ENCODE measurements at regions of chr6 and their contacts with region 1.

Region 1: DNA sequence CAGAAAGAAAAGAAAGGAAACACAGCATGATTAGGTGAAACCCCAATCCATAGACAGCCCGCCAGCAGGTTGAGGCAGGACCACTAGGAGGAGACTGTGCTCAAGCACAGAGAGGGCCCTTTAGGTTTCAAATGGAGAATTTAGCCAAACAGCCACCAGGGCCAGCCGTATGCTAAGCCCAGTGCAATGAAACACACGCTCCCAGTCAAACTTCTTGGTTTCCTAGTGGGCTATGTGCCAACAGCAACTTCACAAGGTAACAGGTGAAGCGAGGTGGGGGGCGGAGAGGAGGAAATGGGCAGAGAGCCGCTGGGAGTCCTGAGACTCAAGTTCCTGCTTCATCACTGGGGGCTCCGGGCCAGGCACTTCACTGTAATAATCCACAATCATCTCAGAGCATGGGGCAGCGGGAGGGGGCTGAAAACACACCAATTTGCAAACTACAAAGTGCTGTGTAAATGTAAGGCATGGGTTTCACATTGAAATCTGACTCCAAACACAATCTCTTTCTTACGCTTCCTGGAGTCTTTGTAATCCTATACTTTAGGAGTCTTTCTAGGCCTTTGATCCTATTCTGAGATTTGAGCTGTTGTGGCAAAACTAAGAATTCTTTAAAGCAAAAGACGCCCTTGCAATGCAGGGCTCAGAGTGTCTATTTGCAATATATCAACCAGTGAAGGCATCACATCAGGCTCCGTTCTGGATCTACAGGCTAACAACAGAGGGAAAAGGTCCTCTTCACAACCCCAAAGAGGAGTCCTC is 117.3 kb downstream of the OPRM1 start:
- DNase-seq: no peak
- H3K4me3 ChIP-seq: no peak overlapping the region
- H3K27ac ChIP-seq: no peak overlapping the region
- H3K4me1 ChIP-seq: peaks cover 0 to 3% of the 10 kb centered on the region in 2 donors
- H3K27me3 ChIP-seq: no peaks in the 10 kb centered on the region
- CTCF ChIP-seq: peak; percentile 29 to 50 (median 31)

Region 2: DNA sequence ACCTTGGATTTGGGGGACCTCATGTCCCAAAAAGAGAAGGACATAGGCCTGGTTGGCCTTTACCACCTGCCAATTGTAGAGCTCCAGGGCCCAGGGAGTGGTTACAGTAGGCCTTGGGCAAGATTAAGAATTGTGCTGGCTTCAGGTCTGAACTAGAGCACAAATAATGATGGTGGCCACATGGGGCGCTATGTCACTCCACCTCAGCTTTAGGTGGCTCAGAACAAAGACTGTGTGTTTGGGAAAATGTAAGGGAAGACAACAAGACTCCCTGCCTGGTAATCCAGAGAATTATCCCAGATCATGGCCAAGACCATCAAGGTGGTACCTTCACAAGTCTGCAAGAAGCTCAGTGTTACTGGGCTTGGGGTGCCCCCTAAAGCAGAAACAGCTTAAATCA is 342.2 kb before region 1 on chr6:
- intact Hi-C with region 1: no loop called
- DNase-seq: no peak
- H3K4me3 ChIP-seq: no peak overlapping the region
- H3K27ac ChIP-seq: no peak overlapping the region
- H3K4me1 ChIP-seq: no peaks in the 10 kb centered on the region
- H3K27me3 ChIP-seq: no peaks in the 10 kb centered on the region
- CTCF ChIP-seq: no peak

Region 3: GRCh38 chr6:154276810-154277628 is 120.7 kb after region 1 on chr6:
- intact Hi-C with region 1: loop called (anchors 1 kb)
- DNase-seq: no peak
- H3K4me3 ChIP-seq: peak overlapping the region in 1 of 2 donors; percentile 44
- H3K27ac ChIP-seq: no peak overlapping the region
- H3K4me1 ChIP-seq: peaks cover 0 to 2% of the 10 kb centered on the region in 2 donors
- H3K27me3 ChIP-seq: no peaks in the 10 kb centered on the region
- CTCF ChIP-seq: peak; percentile 33 to 65 (median 43)

Region 4: GRCh38 chr6:154370545-154370944 is 214.2 kb after region 1 on chr6:
- intact Hi-C with region 1: loop called (anchors 10 kb)
- DNase-seq: no peak
- H3K4me3 ChIP-seq: no peak overlapping the region
- H3K27ac ChIP-seq: no peak overlapping the region
- H3K4me1 ChIP-seq: peaks cover 0 to 3% of the 10 kb centered on the region in 2 donors
- H3K27me3 ChIP-seq: no peaks in the 10 kb centered on the region
- CTCF ChIP-seq: peak in 1 of 3 experiments; percentile 49

Region 5: GRCh38 chr6:154675602-154676088 is 519.3 kb after region 1 on chr6:
- intact Hi-C with region 1: loop called (anchors 5 kb)
- DNase-seq: peak; percentile 68 to 95
- H3K4me3 ChIP-seq: no peak overlapping the region
- H3K27ac ChIP-seq: no peak overlapping the region
- H3K4me1 ChIP-seq: no peaks in the 10 kb centered on the region
- H3K27me3 ChIP-seq: no peaks in the 10 kb centered on the region
- CTCF ChIP-seq: peak; percentile 97 to 99 (median 97)